Naive thymus-derived CD4-positive, alpha-beta T cell (primary cell): ENCODE measurements at regions of chr22 and their contacts with region 1.

Region 1: DNA sequence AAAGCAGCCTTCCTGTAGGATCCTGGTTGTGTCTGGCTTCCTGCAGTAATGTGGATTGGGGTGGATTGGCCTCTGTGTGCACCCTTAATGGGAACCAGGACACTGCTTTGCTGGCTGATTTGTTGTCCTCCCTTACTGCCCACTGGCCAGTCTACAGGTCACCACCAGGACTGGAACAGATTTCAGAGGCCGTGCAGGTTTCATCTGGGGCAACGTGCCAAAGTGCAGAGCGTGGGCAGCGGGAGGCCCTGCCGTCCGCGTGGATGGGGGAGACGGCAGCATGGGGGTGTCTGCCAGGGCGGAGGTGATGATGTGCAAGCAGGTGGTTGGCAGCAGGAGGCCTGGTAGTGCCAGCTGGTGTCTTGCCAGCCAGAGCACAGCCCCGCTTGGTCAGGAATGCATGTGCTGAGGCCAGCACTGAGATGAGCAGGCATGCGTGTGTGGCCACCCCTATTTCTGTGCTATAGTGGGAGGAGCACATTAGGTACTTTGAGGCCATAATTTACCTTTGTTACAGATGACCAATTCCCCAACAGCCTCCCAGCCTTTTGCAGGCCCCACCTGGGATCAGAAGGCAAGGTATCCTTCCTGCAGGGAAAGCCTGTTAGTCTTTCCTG is 24.3 kb downstream of the BCR start:
- DNase-seq: no peak
- ATAC-seq: no peak
- H3K4me3 ChIP-seq: no peak overlapping the region
- H3K4me3 Mint-ChIP-seq: no peak overlapping the region
- H3K27ac ChIP-seq: no peak overlapping the region
- H3K27ac Mint-ChIP-seq: peak overlapping the region in 1 of 9 donors; percentile 71
- H3K4me1 ChIP-seq: peaks cover 0 to 3% of the 10 kb centered on the region in 2 donors
- H3K4me1 Mint-ChIP-seq: peaks cover 9 to 75% (median 52%) of the 10 kb centered on the region in 7 donors
- H3K27me3 ChIP-seq: no peaks in the 10 kb centered on the region
- H3K27me3 Mint-ChIP-seq: no peaks in the 10 kb centered on the region

Region 2: DNA sequence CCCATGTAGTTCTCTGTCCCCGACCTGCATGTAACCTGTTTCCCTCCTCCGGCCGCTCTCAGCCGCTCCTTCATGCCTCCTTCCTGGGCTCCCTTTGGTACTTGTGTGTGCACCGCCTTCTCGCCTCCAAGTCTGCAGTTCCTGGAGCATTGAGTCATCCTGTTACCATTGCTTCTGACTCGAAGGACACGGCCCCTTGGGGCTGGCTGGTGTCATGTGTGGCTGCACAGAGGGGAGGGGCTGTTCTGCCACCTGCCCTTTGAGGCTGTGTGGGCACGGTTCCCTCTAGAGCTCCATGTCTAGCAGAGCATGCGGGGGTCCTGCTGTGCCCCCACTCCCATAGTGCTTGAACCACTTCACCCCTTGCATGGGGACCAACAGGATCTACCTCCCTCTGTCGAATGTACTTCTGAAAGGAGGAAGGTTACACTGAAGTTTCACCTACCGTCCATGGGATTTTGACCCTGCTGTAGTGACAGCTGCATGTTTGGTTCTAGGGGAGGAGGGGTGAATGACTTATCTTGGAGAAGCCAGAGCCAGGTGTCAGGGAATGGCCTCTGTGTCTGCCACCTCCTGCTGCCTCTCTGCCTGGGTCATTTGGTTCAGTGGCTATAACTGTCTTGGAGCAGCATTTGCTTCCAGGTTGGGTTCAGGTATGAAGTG is 15.3 kb after region 1 on chr22:
- CTCF ChIA-PET with region 1: interaction called, 3 read pairs
- POLR2A ChIA-PET with region 1: interaction called, 5 read pairs
- intact Hi-C with region 1: loop called in 1 of 2 experiments (anchors 2 kb)
- DNase-seq: peak in 2 of 9 donors; percentile 35 to 62
- ATAC-seq: peak; percentile 72
- H3K4me3 ChIP-seq: peak overlapping the region; percentile 29
- H3K4me3 Mint-ChIP-seq: peak overlapping the region; percentile 78 to 94 (median 88)
- H3K27ac ChIP-seq: peak overlapping the region; percentile 70
- H3K27ac Mint-ChIP-seq: peak overlapping the region; percentile 80 to 99 (median 86)
- H3K4me1 ChIP-seq: peaks cover 21 to 96% of the 10 kb centered on the region in 2 donors
- H3K4me1 Mint-ChIP-seq: peaks cover 79 to 100% (median 97%) of the 10 kb centered on the region in 7 donors
- H3K27me3 ChIP-seq: no peaks in the 10 kb centered on the region
- H3K27me3 Mint-ChIP-seq: no peaks in the 10 kb centered on the region